ENCODE measurements at regions of chr1 and their contacts with region 1.

Region 1: DNA sequence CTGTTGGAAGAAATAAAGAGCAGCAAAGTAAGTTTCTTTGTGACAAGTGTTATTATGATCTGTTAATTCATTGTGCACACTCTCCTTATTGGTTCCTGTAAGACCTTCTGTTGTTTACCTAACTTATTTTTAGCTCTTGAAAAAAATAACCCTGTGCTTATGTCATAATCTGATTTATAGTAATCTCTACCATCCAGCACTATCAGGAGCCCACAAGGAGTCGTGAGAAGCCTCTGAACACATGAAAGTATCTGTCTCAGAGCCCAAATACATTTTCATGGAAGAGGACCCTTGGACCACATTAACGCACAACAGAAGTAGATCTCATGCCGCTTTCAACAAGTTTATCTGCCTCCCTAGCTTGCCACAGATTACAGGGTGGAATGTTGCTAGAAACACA is 45.8 kb downstream of the CENPF start:
- DNase-seq: no peak
- H3K4me3 ChIP-seq: no peak overlapping the region
- H3K27ac ChIP-seq: no peak overlapping the region
- H3K4me1 ChIP-seq: no peaks in the 10 kb centered on the region
- H3K27me3 ChIP-seq: no peaks in the 10 kb centered on the region
- CTCF ChIP-seq: no peak
- EP300 ChIP-seq: no peak
- POLR2A ChIP-seq: no peak
- RAD21 ChIP-seq: no peak

Region 2: DNA sequence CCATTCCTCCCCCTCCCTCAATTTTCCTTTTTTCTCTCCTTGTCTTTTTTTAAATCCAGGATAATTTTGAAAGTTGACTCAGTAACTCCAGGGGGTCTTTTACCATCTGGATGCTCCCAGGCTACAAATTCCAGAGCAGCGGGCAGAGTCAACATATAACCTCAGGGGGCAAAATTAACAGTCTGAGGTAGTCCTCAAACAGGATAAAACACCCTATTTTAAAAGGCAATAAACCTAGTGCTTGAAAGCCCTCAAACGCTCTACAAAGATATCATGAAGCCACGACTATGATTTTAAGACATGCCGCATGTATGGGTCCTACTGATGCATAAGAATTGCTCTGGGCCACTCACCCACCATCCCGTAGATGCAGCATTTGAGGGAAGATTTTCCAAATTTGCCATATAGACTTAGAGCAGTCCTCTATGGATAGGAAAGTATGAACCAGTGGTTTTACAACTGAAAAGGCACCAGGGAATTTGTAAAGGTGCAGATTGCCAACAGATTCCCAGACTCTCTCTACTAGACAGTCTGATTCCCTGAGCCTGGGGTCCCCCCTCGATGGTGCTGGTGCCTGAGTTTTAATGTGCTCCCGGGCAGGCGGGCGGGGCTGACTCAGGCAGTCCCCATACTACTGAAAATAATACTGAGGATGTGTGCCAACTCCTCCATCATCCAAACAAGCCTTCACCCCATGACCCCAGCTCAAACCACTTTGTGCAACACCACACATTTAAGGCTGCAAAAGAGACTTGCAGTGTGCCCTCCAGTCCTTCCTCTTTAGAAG is 134.6 kb before region 1 on chr1:
- CTCF ChIA-PET with region 1: no interaction called
- POLR2A ChIA-PET with region 1: no interaction called
- DNase-seq: no peak
- H3K4me3 ChIP-seq: peak overlapping the region in 1 of 4 experiments; percentile 39; a peak in 3 of 8 replicates
- H3K27ac ChIP-seq: no peak overlapping the region
- H3K4me1 ChIP-seq: peaks cover 5 to 20% (median 12%) of the 10 kb centered on the region in 4 experiments; a peak in 6 of 7 replicates
- H3K27me3 ChIP-seq: peaks cover 0 to 6% (median 2%) of the 10 kb centered on the region in 4 experiments; a peak in 3 of 7 replicates
- CTCF ChIP-seq: no peak
- EP300 ChIP-seq: no peak
- POLR2A ChIP-seq: no peak
- RAD21 ChIP-seq: no peak

Region 3: GRCh38 chr1:214632091-214632490 is 16.7 kb before region 1 on chr1:
- CTCF ChIA-PET with region 1: interaction called, 41 read pairs
- POLR2A ChIA-PET with region 1: interaction called, 5 read pairs
- DNase-seq: no peak
- H3K4me3 ChIP-seq: no peak overlapping the region
- H3K27ac ChIP-seq: no peak overlapping the region
- H3K4me1 ChIP-seq: no peaks in the 10 kb centered on the region
- H3K27me3 ChIP-seq: no peaks in the 10 kb centered on the region
- CTCF ChIP-seq: no peak
- EP300 ChIP-seq: no peak
- POLR2A ChIP-seq: no peak
- RAD21 ChIP-seq: no peak

Region 4: GRCh38 chr1:214660862-214661261 is 12.1 kb after region 1 on chr1:
- CTCF ChIA-PET with region 1: interaction called, 18 read pairs
- POLR2A ChIA-PET with region 1: no interaction called
- DNase-seq: no peak
- H3K4me3 ChIP-seq: no peak overlapping the region
- H3K27ac ChIP-seq: no peak overlapping the region
- H3K4me1 ChIP-seq: no peaks in the 10 kb centered on the region
- H3K27me3 ChIP-seq: no peaks in the 10 kb centered on the region
- CTCF ChIP-seq: peak in 2 of 3 experiments; percentile 7 to 32; a peak in 2 of 4 replicates
- EP300 ChIP-seq: no peak
- POLR2A ChIP-seq: no peak
- RAD21 ChIP-seq: peak; percentile 32 to 46

Region 5: GRCh38 chr1:214823311-214824117 is 174.7 kb after region 1 on chr1:
- CTCF ChIA-PET with region 1: no interaction called
- POLR2A ChIA-PET with region 1: no interaction called
- DNase-seq: peak in 1 of 2 experiments; percentile 65
- H3K4me3 ChIP-seq: no peak overlapping the region
- H3K27ac ChIP-seq: no peak overlapping the region
- H3K4me1 ChIP-seq: no peaks in the 10 kb centered on the region
- H3K27me3 ChIP-seq: no peaks in the 10 kb centered on the region
- CTCF ChIP-seq: peak; percentile 27 to 39 (median 34); a peak in 3 of 4 replicates
- EP300 ChIP-seq: no peak
- POLR2A ChIP-seq: no peak
- RAD21 ChIP-seq: peak in 1 of 2 experiments; percentile 45; a peak in 3 of 4 replicates

Measured in H1 (cell line).